Body of pancreas (tissue), 4 donors: ENCODE measurements at regions of chr11 and their contacts with region 1.

Region 1: GRCh38 chr11:47642099-47642855 is at the start of gene MTCH2:
- DNase-seq: peak; percentile 96 to 97 (median 96)
- ATAC-seq: peak; percentile 99
- H3K4me3 ChIP-seq: peak within 1 kb of the TSS; percentile 59
- H3K27ac ChIP-seq: peak within 1 kb of the TSS; percentile 82 to 91 (median 89)
- H3K4me1 ChIP-seq: peaks cover 20% of the 10 kb centered on the region
- H3K27me3 ChIP-seq: no peaks in the 10 kb centered on the region
- CTCF ChIP-seq: peak in 6 of 7 experiments; percentile 25 to 55 (median 40)
- POLR2A ChIP-seq: peak; percentile 67 to 87 (median 84)
- total RNA-seq, gene MTCH2: 15.5 to 21.0 TPM

Region 2: GRCh38 chr11:45982656-45983470 is 1659.4 kb before region 1 on chr11:
- intact Hi-C with region 1: no loop called
- DNase-seq: peak in 1 of 4 donors; percentile 13
- ATAC-seq: no peak
- H3K4me3 ChIP-seq: no peak overlapping the region
- H3K27ac ChIP-seq: no peak overlapping the region
- H3K4me1 ChIP-seq: peaks cover 4% of the 10 kb centered on the region
- H3K27me3 ChIP-seq: no peaks in the 10 kb centered on the region
- CTCF ChIP-seq: no peak
- POLR2A ChIP-seq: no peak

Region 3: GRCh38 chr11:47466701-47467250 is 175.5 kb before region 1 on chr11:
- intact Hi-C with region 1: no loop called
- DNase-seq: peak; percentile 69 to 83 (median 80)
- ATAC-seq: peak; percentile 72
- H3K4me3 ChIP-seq: no peak overlapping the region
- H3K27ac ChIP-seq: peak overlapping the region; percentile 50 to 79 (median 66)
- H3K4me1 ChIP-seq: peaks cover 21% of the 10 kb centered on the region
- H3K27me3 ChIP-seq: no peaks in the 10 kb centered on the region
- CTCF ChIP-seq: no peak
- POLR2A ChIP-seq: no peak

Region 4: DNA sequence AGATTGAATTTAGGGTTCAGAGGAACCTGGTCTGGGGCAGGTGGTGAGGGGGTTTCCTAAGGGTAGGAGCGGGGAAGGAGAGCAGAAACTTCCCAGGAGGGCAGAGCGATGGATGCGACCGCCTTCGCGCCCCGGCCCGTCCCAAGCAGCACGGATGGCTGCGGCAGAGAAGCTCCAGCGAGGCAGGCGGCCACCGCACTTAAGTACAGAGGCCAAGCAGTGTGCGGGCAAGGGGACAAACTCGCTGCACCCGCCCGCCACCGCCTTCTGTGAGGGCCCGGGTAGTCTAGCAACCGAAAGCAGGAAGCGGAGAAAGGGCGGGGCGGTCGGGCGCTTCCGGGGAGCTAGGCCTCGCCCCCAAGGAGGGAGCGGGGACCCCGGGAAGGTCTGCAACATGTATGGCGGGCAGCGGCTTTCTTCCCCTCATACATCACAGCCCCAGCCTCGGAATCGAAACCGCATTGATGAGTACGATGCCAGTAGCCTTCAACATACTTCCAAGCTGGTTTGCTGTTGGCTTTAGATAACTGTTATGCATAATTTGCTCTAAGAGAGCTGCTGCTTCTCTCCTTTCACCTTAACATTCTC is 72.9 kb after region 1 on chr11 and contains the start of gene AGBL2:
- intact Hi-C with region 1: loop called (anchors 10 kb)
- DNase-seq: peak; percentile 70 to 77 (median 74)
- ATAC-seq: peak; percentile 96
- H3K4me3 ChIP-seq: peak within 1 kb of the TSS; percentile 83 to 93
- H3K27ac ChIP-seq: peak within 1 kb of the TSS; percentile 40 to 65 (median 53)
- H3K4me1 ChIP-seq: peaks cover 5% of the 10 kb centered on the region
- H3K27me3 ChIP-seq: no peaks in the 10 kb centered on the region
- CTCF ChIP-seq: no peak
- POLR2A ChIP-seq: peak; percentile 52 to 81 (median 76)
- total RNA-seq, gene AGBL2: 2.9 to 5.3 TPM